Prostate gland (tissue), 2 donors: ENCODE measurements at regions of chr12 and their contacts with region 1.

Region 1: GRCh38 chr12:94434171-94434570 is 25.5 kb downstream of the CEP83 start:
- DNase-seq: no peak
- H3K4me3 ChIP-seq: no peak overlapping the region
- H3K27ac ChIP-seq: no peak overlapping the region
- H3K4me1 ChIP-seq: no peaks in the 10 kb centered on the region
- H3K27me3 ChIP-seq: no peaks in the 10 kb centered on the region
- CTCF ChIP-seq: peak in 1 of 4 experiments; percentile 18
- POLR2A ChIP-seq: no peak

Region 2: DNA sequence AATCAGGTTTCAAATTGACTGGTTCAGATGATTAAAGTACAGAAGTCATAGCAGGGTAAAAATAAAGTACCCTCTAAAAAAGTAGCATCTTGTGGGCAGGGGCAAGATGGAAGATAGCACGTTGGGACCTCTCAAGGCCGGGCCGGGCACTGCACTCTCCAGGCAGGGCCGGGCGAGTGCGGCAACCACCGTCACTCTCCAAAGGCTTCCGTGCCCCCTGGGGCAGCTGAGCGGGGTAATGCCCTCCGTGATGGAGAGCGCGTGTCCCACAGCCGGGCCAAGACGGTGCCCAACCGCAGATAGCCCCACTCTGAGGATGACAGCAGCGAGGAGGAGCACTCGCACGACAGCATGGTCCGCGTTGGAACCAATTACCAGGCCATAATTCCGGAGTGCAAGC is 294.4 kb before region 1 on chr12:
- intact Hi-C with region 1: loop called (anchors 5 kb)
- DNase-seq: no peak
- H3K4me3 ChIP-seq: no peak overlapping the region
- H3K27ac ChIP-seq: no peak overlapping the region
- H3K4me1 ChIP-seq: no peaks in the 10 kb centered on the region
- H3K27me3 ChIP-seq: no peaks in the 10 kb centered on the region
- CTCF ChIP-seq: no peak
- POLR2A ChIP-seq: no peak